Lower lobe of right lung (tissue), 2 donors: ENCODE measurements at regions of chr7 and their contacts with region 1.

Region 1: DNA sequence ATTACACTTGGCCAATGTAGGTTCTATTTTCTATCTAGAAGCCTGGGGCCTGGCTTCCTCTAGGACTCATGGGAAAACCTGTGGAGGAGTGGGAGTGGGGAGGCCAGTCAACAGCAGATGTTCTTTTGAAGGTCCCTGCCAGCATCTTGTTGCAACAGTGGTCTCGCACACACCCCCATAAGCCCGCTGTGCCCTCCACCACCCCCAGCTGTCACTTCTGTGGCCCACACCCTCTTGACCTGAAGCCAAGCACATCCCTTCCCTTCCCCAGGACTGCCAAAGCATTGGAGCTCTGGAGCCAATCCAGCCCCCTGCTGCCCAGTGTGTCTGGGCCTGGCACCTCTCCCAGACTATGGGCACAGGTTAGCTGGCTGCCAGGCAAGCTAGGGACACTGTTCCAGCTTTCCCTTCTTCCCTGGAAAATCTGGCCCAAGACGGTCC is 1.9 kb upstream of the STX1A start:
- DNase-seq: no peak
- ATAC-seq: no peak
- H3K4me3 ChIP-seq: no peak overlapping the region
- H3K27ac ChIP-seq: no peak overlapping the region
- H3K4me1 ChIP-seq: peaks cover 23% of the 10 kb centered on the region
- H3K27me3 ChIP-seq: peaks cover under 1% of the 10 kb centered on the region
- CTCF ChIP-seq: no peak

Region 2: GRCh38 chr7:73606801-73607691 is 114.4 kb before region 1 on chr7:
- intact Hi-C with region 1: loop called (anchors 10 kb)
- DNase-seq: peak; percentile 72
- ATAC-seq: peak; percentile 75 to 81
- H3K4me3 ChIP-seq: no peak overlapping the region
- H3K27ac ChIP-seq: no peak overlapping the region
- H3K4me1 ChIP-seq: peaks cover 5% of the 10 kb centered on the region
- H3K27me3 ChIP-seq: peaks cover 31% of the 10 kb centered on the region
- CTCF ChIP-seq: peak; percentile 93